ENCODE measurements at regions of chr5 and their contacts with region 1.

Region 1: GRCh38 chr5:17189381-17190036 is 27.9 kb upstream of the BASP1 start:
- H3K4me3 ChIP-seq: no peak overlapping the region
- H3K27ac ChIP-seq: no peak overlapping the region
- H3K4me1 ChIP-seq: 0 out of 2 replicates have a peak, but pooled peaks cover 5% of the 10 kb centered on the region
- CTCF ChIP-seq: peak; percentile 76

Region 2: DNA sequence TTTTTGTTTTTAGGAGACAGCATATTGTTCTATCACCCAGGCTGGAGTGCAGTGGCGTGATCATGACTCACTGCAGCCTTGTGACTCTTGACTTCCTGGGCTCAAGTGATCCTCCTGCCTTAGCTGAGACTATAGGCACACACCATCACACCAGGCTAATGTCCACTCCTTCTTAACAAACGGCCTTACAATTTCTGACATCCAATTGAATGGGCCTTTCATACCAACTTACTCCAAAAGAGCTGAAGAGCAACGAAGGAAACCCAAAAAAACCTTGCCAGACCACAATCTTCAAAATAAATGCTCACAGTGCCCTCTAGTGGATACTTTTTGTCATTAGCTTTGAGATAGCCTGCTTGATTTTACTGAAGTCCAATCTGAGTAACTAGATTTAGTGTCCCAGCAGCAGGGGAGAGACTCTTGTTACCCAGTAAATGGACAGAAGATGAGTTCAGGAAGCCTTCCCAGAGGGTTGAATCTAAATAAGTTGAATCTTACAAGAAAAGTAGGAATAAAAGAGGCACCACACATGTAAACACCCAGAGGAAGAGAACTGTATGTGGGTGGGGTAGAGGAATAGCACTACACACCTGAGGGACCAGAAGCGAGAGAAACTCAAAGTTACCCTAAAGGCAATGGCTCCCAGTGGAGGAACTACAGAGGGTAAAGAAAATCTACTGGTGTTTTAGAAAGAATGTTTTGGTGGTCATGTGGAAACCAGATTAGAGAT is 733.2 kb before region 1 on chr5:
- CTCF ChIA-PET with region 1: interaction called, 19 read pairs
- POLR2A ChIA-PET with region 1: no interaction called
- H3K4me3 ChIP-seq: no peak overlapping the region
- H3K27ac ChIP-seq: no peak overlapping the region
- H3K4me1 ChIP-seq: no peaks in the 10 kb centered on the region
- CTCF ChIP-seq: no peak

Region 3: DNA sequence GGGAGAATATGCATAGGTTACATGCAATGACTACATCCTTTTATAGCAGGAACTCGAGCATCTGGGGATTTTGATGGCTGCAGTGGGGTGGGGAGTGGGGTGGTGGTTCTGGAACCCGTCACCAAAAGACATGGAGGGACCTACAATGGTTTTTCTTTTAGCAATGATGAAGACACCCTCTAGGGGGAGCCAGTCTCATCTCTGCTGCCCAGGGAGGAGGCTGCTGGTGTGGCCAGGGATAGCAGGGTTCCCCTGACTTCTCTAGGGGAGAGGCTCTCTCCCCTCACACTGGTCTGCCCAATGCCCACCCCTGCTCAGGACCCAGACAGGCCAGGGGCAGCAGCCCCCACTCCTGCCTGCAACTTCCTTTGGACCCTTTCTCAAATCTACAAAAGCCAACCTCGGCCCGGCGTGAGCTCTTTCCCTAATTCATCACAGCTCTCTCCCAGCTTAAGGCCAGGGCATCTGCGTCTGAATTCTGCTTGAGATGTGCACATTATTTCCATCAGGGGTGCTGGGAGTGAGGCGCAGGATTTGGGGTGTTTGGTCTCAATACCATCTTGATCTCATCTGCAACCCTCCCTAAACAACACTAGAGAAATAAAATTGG is 499.2 kb before region 1 on chr5:
- CTCF ChIA-PET with region 1: interaction called, 66 read pairs
- POLR2A ChIA-PET with region 1: no interaction called
- H3K4me3 ChIP-seq: no peak overlapping the region
- H3K27ac ChIP-seq: no peak overlapping the region
- H3K4me1 ChIP-seq: no peaks in the 10 kb centered on the region
- CTCF ChIP-seq: peak; percentile 58; the same call in 1 of the 2 replicates

Region 4: GRCh38 chr5:16812911-16813310 is 376.6 kb before region 1 on chr5:
- CTCF ChIA-PET with region 1: interaction called, 15 read pairs
- POLR2A ChIA-PET with region 1: no interaction called
- H3K4me3 ChIP-seq: no peak overlapping the region
- H3K27ac ChIP-seq: no peak overlapping the region
- H3K4me1 ChIP-seq: peaks cover 5% of the 10 kb centered on the region; the same call in 1 of the 2 replicates
- CTCF ChIP-seq: no peak

Region 5: GRCh38 chr5:16946725-16947124 is 242.8 kb before region 1 on chr5:
- CTCF ChIA-PET with region 1: no interaction called
- POLR2A ChIA-PET with region 1: no interaction called
- H3K4me3 ChIP-seq: no peak overlapping the region
- H3K27ac ChIP-seq: no peak overlapping the region
- H3K4me1 ChIP-seq: no peaks in the 10 kb centered on the region
- CTCF ChIP-seq: no peak

Region 6: GRCh38 chr5:17000291-17000939 is 189.1 kb before region 1 on chr5:
- CTCF ChIA-PET with region 1: interaction called, 10 read pairs
- POLR2A ChIA-PET with region 1: no interaction called
- H3K4me3 ChIP-seq: no peak overlapping the region
- H3K27ac ChIP-seq: no peak overlapping the region
- H3K4me1 ChIP-seq: 0 out of 2 replicates have a peak, but pooled peaks cover 3% of the 10 kb centered on the region
- CTCF ChIP-seq: no peak

Region 7: DNA sequence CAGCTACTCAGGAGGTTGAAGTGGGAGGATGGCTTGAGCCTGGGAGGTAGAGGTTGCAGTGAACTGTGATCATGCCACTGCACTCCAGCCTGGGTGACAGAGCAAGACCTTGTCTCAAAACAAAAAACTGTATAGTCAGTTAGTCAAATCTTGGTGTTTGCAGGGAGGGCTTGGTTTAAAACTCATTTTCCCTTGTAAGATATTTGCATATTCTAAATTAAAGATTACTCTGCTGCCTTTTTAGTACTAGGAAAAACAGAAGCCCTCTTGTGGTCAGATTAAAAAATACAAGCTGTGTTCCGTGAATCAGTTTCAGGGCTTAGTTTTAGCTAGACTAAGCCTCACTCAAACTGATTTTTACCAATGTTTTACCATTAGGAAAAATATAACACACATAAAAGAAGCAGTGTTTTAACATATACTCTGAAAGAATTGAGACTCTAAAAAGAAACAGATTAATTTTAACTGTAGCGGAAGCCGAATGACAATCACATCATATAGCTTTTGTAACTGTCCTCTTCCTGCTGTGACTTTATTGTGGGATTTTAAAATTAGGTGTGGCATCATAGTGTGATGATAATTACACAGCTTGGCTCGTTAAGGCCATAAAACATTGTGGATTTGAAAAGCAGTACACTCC is 56.9 kb before region 1 on chr5:
- CTCF ChIA-PET with region 1: interaction called, 50 read pairs
- POLR2A ChIA-PET with region 1: interaction called, 4 read pairs
- H3K4me3 ChIP-seq: no peak overlapping the region
- H3K27ac ChIP-seq: no peak overlapping the region
- H3K4me1 ChIP-seq: no peaks in the 10 kb centered on the region
- CTCF ChIP-seq: no peak

Region 8: GRCh38 chr5:17204133-17204489 is 14.6 kb after region 1 on chr5:
- CTCF ChIA-PET with region 1: interaction called, 45 read pairs
- POLR2A ChIA-PET with region 1: interaction called, 4 read pairs
- H3K4me3 ChIP-seq: no peak overlapping the region
- H3K27ac ChIP-seq: no peak overlapping the region
- H3K4me1 ChIP-seq: no peaks in the 10 kb centered on the region
- CTCF ChIP-seq: no peak

Region 9: GRCh38 chr5:17238521-17239041 is 49.1 kb after region 1 on chr5:
- CTCF ChIA-PET with region 1: no interaction called
- POLR2A ChIA-PET with region 1: no interaction called
- H3K4me3 ChIP-seq: no peak overlapping the region
- H3K27ac ChIP-seq: no peak overlapping the region
- H3K4me1 ChIP-seq: peaks cover 12% of the 10 kb centered on the region
- CTCF ChIP-seq: no peak